ENCODE measurements at regions of chr1 and their contacts with region 1.

Region 1: DNA sequence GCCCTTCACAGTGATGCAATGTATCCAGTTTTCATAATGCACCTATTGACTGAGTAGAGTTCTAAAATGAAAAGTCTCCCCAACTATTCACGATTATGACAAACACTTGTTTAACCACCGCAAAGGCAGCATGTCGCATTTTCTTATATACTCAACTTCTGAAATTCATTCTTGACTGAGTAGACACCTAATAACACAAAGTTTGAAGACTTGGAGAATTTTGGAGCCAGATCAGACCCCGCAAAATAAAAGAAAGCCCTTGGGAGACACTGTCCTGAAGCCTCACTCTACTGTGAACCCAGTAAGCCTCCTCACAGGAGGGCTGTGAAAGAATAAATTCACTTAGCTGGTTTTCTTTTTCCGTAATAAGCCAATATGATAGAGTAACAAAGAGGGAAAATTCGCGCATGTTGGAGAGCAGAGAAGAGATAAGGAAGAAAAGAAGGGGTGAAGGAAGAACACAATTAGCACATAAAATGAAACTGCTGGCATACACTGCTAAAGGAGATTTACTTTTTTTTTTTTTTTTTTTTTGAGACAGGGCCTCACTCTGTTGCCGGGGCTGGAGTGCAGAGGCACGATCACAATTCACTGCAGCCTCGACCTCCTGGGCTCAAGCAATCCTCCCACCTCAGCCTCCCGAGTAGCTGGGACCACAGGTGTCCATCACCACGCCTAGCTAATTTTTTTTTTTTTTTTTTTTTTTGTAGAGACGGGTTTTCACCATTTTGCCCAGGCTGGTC is 492 bp upstream of the COLGALT2 start:
- DNase-seq: no peak
- ATAC-seq: no peak
- H3K4me3 ChIP-seq: no peak overlapping the region; the same call in 1 of the 2 replicates
- H3K27ac ChIP-seq: no peak overlapping the region
- H3K4me1 ChIP-seq: peaks cover 4% of the 10 kb centered on the region
- H3K27me3 ChIP-seq: peaks cover 8 to 38% of the 10 kb centered on the region in 2 experiments
- CTCF ChIP-seq: no peak
- EP300 ChIP-seq: no peak
- POLR2A ChIP-seq: no peak
- RAD21 ChIP-seq: no peak

Region 2: DNA sequence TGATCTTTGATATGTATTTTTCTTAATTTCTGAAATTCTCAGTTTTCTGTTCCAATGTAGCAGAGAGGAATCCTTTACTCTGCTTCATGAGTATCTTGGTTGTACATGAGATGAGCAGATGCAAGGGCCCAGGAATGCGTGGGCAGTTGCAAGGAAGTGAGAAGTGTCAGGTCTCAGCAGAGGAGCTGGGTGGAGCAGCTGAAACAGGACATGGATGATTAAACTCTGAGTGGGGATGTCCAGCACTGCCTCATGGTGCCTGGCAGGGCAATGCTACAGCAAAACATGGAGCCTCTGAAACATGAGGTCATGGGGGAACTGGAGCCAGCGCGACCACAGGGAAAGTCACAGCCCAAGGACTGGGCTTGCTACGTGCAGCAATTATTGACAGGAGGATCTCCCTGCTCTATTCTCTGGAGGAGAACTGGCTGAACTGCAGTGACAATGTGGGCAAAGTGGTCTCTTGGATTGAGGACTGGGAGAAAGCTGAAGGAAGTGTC is 48.9 kb before region 1 on chr1:
- CTCF ChIA-PET with region 1: interaction called, 3 read pairs
- POLR2A ChIA-PET with region 1: no interaction called
- RAD21 ChIA-PET with region 1: no interaction called
- SMC1A ChIA-PET with region 1: interaction called, 5 read pairs
- in situ Hi-C with region 1: no loop called
- intact Hi-C with region 1: loop called (anchors 2 kb)
- DNase-seq: peak; percentile 83
- ATAC-seq: peak; percentile 98
- H3K4me3 ChIP-seq: no peak overlapping the region
- H3K27ac ChIP-seq: no peak overlapping the region
- H3K4me1 ChIP-seq: peaks cover 13% of the 10 kb centered on the region
- H3K27me3 ChIP-seq: peaks cover 0 to 11% of the 10 kb centered on the region in 2 experiments; a peak in 1 of 4 replicates
- CTCF ChIP-seq: no peak
- EP300 ChIP-seq: peak in 1 of 2 experiments; percentile 32; a peak in 1 of 4 replicates
- POLR2A ChIP-seq: no peak
- RAD21 ChIP-seq: no peak

Region 3: GRCh38 chr1:184051485-184052193 is 13.6 kb after region 1 on chr1 and contains the start of gene TSEN15:
- CTCF ChIA-PET with region 1: interaction called, 6 read pairs
- POLR2A ChIA-PET with region 1: no interaction called
- RAD21 ChIA-PET with region 1: interaction called, 8 read pairs
- SMC1A ChIA-PET with region 1: interaction called, 10 read pairs
- in situ Hi-C with region 1: no loop called
- intact Hi-C with region 1: no loop called
- DNase-seq: peak; percentile 40
- ATAC-seq: peak; percentile 97
- H3K4me3 ChIP-seq: peak within 1 kb of the TSS; percentile 83
- H3K27ac ChIP-seq: peak within 1 kb of the TSS; percentile 78
- H3K4me1 ChIP-seq: peaks cover 7% of the 10 kb centered on the region; the same call in 1 of the 2 replicates
- H3K27me3 ChIP-seq: no peaks in the 10 kb centered on the region; a peak in 1 of 4 replicates
- CTCF ChIP-seq: no peak
- EP300 ChIP-seq: no peak
- POLR2A ChIP-seq: peak; percentile 98
- RAD21 ChIP-seq: no peak
- polyA plus RNA-seq, gene TSEN15: 21.1 to 35.1 TPM